Activated CD4-positive, alpha-beta memory T cell treated with anti-CD3 and anti-CD28 coated beads for 36 hours (primary cell): ENCODE measurements at regions of chr3 and their contacts with region 1.

Region 1: GRCh38 chr3:151203051-151203420 is at the start of gene GPR171:
- DNase-seq: peak; percentile 84
- H3K4me3 Mint-ChIP-seq: peak within 1 kb of the TSS; percentile 86
- H3K27ac Mint-ChIP-seq: peak within 1 kb of the TSS; percentile 99
- H3K4me1 Mint-ChIP-seq: peaks cover 65% of the 10 kb centered on the region
- H3K27me3 Mint-ChIP-seq: no peaks in the 10 kb centered on the region
- total RNA-seq, gene GPR171: 70.7 to 74.0 TPM

Region 2: DNA sequence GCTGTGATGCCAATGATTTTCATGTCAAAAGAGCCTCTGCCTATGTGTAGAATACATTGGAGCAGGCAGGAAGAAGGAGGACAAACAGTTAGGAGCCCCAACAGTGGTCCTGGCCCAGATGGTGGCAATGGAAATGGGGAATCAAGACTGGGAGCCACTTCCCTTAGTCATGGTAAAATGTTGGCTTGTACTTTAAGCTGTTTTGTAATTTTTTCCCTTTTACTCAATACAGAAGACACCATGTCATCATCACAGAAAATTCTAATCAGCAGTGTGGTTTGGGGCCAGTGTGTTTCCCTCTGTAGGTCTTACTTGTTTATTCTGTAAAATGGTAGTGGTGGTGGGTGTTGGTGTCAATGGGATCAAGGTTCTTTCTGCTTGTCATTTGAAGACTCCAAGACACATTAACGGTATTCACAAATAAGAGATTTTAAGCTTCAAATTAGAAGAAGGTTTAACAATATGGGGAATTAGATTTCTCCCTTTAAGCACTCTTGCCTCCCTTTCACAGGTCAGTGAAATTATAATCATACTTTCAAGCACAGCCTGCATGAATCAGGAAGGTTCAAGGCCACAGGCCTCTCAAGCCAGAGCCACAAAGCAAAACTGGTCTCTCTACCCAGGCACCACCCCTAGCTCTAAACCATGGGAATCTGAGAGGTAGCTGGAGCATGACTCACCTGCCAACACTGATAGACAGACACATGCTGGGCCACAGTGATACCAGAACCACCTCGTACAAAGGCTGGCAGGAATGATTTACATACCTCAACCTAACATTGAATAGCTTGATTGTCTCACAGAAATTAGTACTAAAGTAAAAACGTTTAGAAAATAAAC is 464.9 kb before region 1 on chr3:
- CTCF ChIA-PET with region 1: no interaction called
- POLR2A ChIA-PET with region 1: interaction called, 8 read pairs
- intact Hi-C with region 1: loop called (anchors 1 kb)
- DNase-seq: peak; percentile 79
- H3K4me3 Mint-ChIP-seq: peak overlapping the region; percentile 38
- H3K27ac Mint-ChIP-seq: peak overlapping the region; percentile 99
- H3K4me1 Mint-ChIP-seq: peaks cover 73% of the 10 kb centered on the region
- H3K27me3 Mint-ChIP-seq: no peaks in the 10 kb centered on the region

Region 3: DNA sequence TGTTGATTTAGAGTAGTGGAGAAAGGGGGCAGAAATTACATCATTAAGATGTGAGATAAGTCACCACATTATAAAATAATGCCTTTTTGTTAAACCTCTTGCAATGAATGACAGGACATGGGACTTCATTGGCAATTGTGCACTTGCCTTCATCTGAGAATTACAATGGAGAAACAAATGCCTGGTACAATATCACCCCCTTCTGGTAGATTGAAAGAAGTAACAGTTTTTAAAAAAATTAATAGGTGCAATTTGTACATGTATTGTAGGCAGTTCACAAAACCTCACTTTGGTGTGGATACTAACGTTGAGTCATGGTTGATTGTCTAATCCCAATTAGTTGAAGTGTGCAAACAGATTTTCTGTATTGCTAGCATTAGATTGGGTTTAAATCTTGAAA is 79.9 kb after region 1 on chr3:
- CTCF ChIA-PET with region 1: interaction called, 8 read pairs
- POLR2A ChIA-PET with region 1: interaction called, 4 read pairs
- intact Hi-C with region 1: loop called (anchors 1 kb)
- DNase-seq: no peak
- H3K4me3 Mint-ChIP-seq: no peak overlapping the region
- H3K27ac Mint-ChIP-seq: peak overlapping the region; percentile 62
- H3K4me1 Mint-ChIP-seq: peaks cover 32% of the 10 kb centered on the region
- H3K27me3 Mint-ChIP-seq: no peaks in the 10 kb centered on the region

Region 4: DNA sequence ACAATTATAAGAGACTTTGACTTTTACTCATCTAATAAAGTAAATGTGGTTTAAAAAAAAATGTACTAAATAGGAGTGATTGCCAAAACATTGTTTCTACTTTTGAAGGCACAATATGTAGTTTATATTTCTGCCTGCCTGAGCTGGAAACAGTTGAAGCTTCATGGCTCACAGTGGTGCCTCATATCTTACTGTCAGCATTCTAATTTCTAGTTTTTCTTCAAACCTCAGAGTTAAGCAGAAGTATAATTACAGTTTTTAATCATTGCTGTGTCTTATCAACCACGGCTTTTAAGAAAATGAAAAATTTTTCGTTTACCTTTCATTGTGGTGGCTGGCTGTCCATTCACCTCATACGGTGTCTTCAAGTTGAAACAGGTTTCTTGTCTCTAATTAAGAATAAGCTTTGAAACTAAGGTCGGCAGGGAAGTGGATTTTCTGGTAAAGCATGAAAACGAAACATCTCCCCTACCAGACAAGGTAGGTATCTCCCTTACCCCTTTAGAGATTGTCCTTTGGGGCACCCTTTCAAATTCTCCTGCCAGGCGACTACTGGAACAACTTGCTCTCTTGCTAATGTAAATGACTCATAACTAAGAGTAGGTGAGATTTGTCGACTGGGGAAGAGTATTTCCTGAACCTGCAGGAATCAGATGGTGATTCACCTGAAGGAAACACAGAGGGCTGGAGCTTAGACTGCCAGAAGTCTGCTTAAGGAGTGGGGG is 113.4 kb after region 1 on chr3 and contains the start of gene GPR87:
- CTCF ChIA-PET with region 1: no interaction called
- POLR2A ChIA-PET with region 1: interaction called, 6 read pairs
- intact Hi-C with region 1: loop called (anchors 1 kb)
- DNase-seq: peak; percentile 61
- H3K4me3 Mint-ChIP-seq: peak within 1 kb of the TSS; percentile 17
- H3K27ac Mint-ChIP-seq: peak within 1 kb of the TSS; percentile 68
- H3K4me1 Mint-ChIP-seq: peaks cover 24% of the 10 kb centered on the region
- H3K27me3 Mint-ChIP-seq: peaks cover 8% of the 10 kb centered on the region
- total RNA-seq, gene GPR87: 1.1 TPM

Region 5: GRCh38 chr3:151697496-151697895 is 494.5 kb after region 1 on chr3:
- CTCF ChIA-PET with region 1: no interaction called
- POLR2A ChIA-PET with region 1: no interaction called
- intact Hi-C with region 1: no loop called
- DNase-seq: no peak
- H3K4me3 Mint-ChIP-seq: no peak overlapping the region
- H3K27ac Mint-ChIP-seq: no peak overlapping the region
- H3K4me1 Mint-ChIP-seq: no peaks in the 10 kb centered on the region
- H3K27me3 Mint-ChIP-seq: peaks cover 2% of the 10 kb centered on the region

Region 6: DNA sequence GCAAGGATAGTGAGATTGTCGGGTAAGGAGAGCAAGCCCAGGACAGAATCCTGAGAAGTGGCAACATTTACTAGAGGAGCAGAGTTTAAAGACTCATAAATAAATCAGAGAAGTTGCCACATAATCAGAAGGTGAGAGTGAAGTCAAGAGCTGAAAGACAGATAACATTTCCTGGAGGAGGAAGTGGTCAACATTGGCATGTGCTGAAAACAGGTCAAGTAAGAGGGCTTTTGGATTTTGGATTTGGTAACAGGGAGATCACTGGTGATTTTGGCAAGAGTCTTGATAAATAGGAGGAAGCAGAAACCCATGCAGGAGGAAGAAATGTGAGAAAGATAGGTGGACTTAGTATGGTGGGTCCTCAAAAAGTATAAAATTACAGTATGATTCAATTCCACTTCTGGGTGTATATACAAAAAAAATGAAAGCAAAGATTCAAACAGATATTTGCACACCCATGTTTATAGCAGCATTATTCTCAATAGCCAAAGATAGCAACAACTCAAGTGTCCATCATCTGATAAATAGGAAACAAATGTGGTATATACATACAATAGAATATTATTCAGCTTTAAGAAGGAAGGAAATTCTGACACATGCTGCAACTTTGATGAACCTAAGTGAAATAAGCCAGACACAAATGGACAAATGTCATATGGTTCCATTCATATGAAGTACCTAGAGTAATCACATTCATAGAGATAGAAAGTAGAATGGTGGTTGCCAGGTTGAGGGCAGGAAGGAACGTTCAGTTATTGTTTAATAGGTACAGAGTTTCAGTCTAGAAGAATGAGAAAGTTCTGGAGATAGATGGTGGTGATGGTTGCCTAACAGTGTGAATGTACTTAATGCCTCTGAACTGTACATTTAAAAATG is 1038.3 kb after region 1 on chr3:
- CTCF ChIA-PET with region 1: no interaction called
- POLR2A ChIA-PET with region 1: interaction called, 3 read pairs
- intact Hi-C with region 1: loop called (anchors 5 kb)
- DNase-seq: no peak
- H3K4me3 Mint-ChIP-seq: peak overlapping the region; percentile 84
- H3K27ac Mint-ChIP-seq: peak overlapping the region; percentile 88
- H3K4me1 Mint-ChIP-seq: peaks cover 59% of the 10 kb centered on the region
- H3K27me3 Mint-ChIP-seq: no peaks in the 10 kb centered on the region

Region 7: DNA sequence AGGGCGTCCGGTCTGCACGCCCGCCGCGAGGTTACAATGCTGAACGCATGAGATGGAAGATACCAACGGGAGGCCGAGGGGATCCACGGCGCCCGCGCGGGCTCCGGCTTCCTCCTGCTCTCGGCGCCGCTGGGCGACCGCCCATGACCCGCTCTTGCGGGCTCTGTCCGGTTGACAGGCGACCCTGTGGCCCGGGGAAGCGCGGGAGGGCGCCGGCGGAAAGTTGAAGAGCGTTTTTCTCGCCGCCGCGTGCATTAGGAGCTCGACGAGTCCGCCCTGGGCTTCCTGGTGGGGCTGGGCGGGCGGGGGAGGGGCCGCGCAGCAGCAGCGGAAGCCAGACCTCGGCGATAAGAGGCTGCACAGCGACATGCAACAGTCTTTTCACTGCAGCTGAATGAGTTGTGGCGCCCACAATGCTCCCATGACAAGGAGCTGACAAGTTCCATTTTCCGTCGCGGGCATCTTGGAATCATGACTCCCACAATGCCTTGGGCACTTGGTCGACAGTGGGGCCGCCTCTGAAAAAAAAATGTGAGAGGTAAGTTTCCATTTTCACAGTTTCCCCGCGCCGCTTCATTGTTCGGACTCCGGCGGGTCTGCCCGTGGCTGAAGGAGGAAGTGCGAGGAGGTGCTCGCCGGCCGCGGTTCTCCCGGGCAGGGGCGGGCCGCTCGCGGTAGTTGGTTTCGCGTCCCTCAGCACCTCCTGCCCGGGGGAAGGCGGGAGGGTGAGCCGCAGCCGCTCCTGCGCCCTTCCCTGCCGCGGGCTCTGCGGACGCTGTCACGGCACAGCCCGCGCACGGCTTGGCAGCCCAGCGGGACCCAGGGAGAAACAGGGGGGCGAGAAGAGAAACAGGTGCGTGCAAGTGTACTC is 1065.8 kb after region 1 on chr3 and contains the start of gene MBNL1:
- CTCF ChIA-PET with region 1: no interaction called
- POLR2A ChIA-PET with region 1: interaction called, 13 read pairs
- intact Hi-C with region 1: no loop called
- DNase-seq: peak; percentile 93
- H3K4me3 Mint-ChIP-seq: peak within 1 kb of the TSS; percentile 84
- H3K27ac Mint-ChIP-seq: peak within 1 kb of the TSS; percentile 84
- H3K4me1 Mint-ChIP-seq: peaks cover 52% of the 10 kb centered on the region
- H3K27me3 Mint-ChIP-seq: no peaks in the 10 kb centered on the region
- total RNA-seq, gene MBNL1: 290 to 302 TPM